Activated naive CD4-positive, alpha-beta T cell treated with anti-CD3 and anti-CD28 coated beads for 36 hours (primary cell): ENCODE measurements at regions of chr15 and their contacts with region 1.

Region 1: GRCh38 chr15:85582131-85583079 is 202.0 kb downstream of the AKAP13 start:
- DNase-seq: peak; percentile 77
- H3K4me3 Mint-ChIP-seq: peak overlapping the region; percentile 71
- H3K27ac Mint-ChIP-seq: peak overlapping the region; percentile 85
- H3K4me1 Mint-ChIP-seq: peaks cover 68% of the 10 kb centered on the region
- H3K27me3 Mint-ChIP-seq: no peaks in the 10 kb centered on the region

Region 2: GRCh38 chr15:85318048-85318731 is 264.2 kb before region 1 on chr15:
- CTCF ChIA-PET with region 1: no interaction called
- intact Hi-C with region 1: loop called (anchors 5 kb)
- DNase-seq: peak; percentile 40
- H3K4me3 Mint-ChIP-seq: no peak overlapping the region
- H3K27ac Mint-ChIP-seq: no peak overlapping the region
- H3K4me1 Mint-ChIP-seq: peaks cover 43% of the 10 kb centered on the region
- H3K27me3 Mint-ChIP-seq: no peaks in the 10 kb centered on the region

Region 3: GRCh38 chr15:85504749-85505676 is 77.4 kb before region 1 on chr15:
- CTCF ChIA-PET with region 1: no interaction called
- intact Hi-C with region 1: loop called (anchors 5 kb)
- DNase-seq: peak; percentile 71
- H3K4me3 Mint-ChIP-seq: no peak overlapping the region
- H3K27ac Mint-ChIP-seq: no peak overlapping the region
- H3K4me1 Mint-ChIP-seq: peaks cover 55% of the 10 kb centered on the region
- H3K27me3 Mint-ChIP-seq: no peaks in the 10 kb centered on the region

Region 4: DNA sequence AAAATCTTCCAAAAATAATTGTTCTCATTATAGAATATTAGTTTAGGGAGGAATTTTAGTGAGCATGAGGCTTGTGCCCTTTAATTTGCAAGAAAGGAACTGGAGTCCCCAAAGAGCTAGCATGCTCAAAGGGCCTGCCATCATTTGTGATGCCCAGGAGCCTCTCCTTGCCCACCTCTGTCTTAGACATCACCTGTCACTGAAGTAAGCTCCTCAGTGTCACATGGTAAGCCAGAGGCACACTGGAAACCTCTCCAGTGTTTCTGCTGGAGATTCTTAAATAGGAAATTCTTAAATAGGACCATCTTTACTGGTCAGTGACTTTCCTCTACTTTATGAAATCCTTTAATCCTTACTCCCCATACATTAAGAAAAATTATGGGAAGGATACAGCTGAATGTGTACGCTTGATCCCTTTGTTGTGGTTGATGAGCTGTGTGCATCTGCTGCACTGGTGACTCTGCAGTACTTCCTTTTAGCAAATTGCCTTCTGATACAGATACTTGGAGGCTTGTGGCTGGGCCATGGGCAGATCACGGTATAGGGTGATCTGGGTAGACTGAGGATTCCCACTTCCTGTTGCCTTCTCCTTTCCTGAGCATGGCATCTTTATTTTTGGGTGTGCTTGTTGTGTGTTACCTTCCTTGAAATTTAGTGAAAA is 14.9 kb after region 1 on chr15:
- CTCF ChIA-PET with region 1: interaction called, 5 read pairs
- intact Hi-C with region 1: loop called (anchors 1 kb)
- DNase-seq: peak; percentile 55
- H3K4me3 Mint-ChIP-seq: no peak overlapping the region
- H3K27ac Mint-ChIP-seq: no peak overlapping the region
- H3K4me1 Mint-ChIP-seq: peaks cover 37% of the 10 kb centered on the region
- H3K27me3 Mint-ChIP-seq: no peaks in the 10 kb centered on the region

Region 5: DNA sequence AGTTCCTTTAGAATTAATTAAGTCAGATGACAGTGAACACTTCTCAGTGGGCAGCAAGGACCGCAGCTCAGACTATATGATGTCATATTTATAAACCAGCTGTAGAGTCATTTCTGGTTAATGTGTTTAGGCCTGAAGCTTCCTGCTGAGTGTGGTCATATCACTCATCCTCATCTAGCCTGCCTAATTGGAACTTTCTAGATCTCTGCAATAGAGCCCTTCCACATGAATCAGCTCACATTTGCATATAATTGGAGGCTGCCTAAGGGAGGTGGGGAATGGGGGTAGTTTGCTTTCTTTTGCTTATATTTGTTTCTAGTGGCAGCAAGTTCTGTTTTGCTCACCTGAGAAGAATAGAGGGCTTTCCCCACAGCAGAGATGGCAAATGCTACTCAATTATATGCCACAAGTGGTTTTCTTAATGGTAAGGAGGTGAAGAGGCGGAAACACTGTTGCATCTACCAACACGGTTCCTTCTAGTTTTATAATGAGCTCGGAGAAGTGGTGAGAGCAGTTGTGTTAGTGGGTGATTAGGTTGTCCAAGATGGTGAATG is 64.2 kb after region 1 on chr15:
- CTCF ChIA-PET with region 1: no interaction called
- intact Hi-C with region 1: loop called (anchors 2 kb)
- DNase-seq: peak; percentile 21
- H3K4me3 Mint-ChIP-seq: no peak overlapping the region
- H3K27ac Mint-ChIP-seq: peak overlapping the region; percentile 52
- H3K4me1 Mint-ChIP-seq: peaks cover 46% of the 10 kb centered on the region
- H3K27me3 Mint-ChIP-seq: no peaks in the 10 kb centered on the region

Region 6: GRCh38 chr15:85681386-85681785 is 99.0 kb after region 1 on chr15:
- CTCF ChIA-PET with region 1: no interaction called
- intact Hi-C with region 1: no loop called
- DNase-seq: no peak
- H3K4me3 Mint-ChIP-seq: no peak overlapping the region
- H3K27ac Mint-ChIP-seq: no peak overlapping the region
- H3K4me1 Mint-ChIP-seq: peaks cover 5% of the 10 kb centered on the region
- H3K27me3 Mint-ChIP-seq: no peaks in the 10 kb centered on the region

Region 7: GRCh38 chr15:85707519-85708338 is 125.3 kb after region 1 on chr15:
- CTCF ChIA-PET with region 1: no interaction called
- intact Hi-C with region 1: loop called (anchors 1 kb)
- DNase-seq: peak; percentile 51
- H3K4me3 Mint-ChIP-seq: peak overlapping the region; percentile 79
- H3K27ac Mint-ChIP-seq: peak overlapping the region; percentile 99
- H3K4me1 Mint-ChIP-seq: peaks cover 87% of the 10 kb centered on the region
- H3K27me3 Mint-ChIP-seq: no peaks in the 10 kb centered on the region